ENCODE measurements at regions of chr21 and their contacts with region 1.

Region 1: GRCh38 chr21:34129039-34129891 is 55.9 kb downstream of the MRPS6 start:
- DNase-seq: peak; percentile 5 to 50
- H3K4me3 ChIP-seq: peak overlapping the region in 3 of 4 experiments; percentile 18 to 41 (median 21); a peak in 3 of 8 replicates
- H3K27ac ChIP-seq: no peak overlapping the region
- H3K4me1 ChIP-seq: peaks cover 12 to 45% (median 37%) of the 10 kb centered on the region in 4 experiments
- H3K27me3 ChIP-seq: no peaks in the 10 kb centered on the region
- CTCF ChIP-seq: peak in 2 of 3 experiments; percentile 8 to 43; a peak in 2 of 4 replicates
- EP300 ChIP-seq: no peak
- POLR2A ChIP-seq: no peak
- RAD21 ChIP-seq: peak; percentile 36 to 40; a peak in 3 of 4 replicates

Region 2: GRCh38 chr21:34091607-34092006 is 37.7 kb before region 1 on chr21:
- CTCF ChIA-PET with region 1: interaction called, 17 read pairs
- POLR2A ChIA-PET with region 1: no interaction called
- DNase-seq: no peak
- H3K4me3 ChIP-seq: no peak overlapping the region
- H3K27ac ChIP-seq: no peak overlapping the region
- H3K4me1 ChIP-seq: peaks cover 2 to 17% (median 6%) of the 10 kb centered on the region in 4 experiments; a peak in 5 of 7 replicates
- H3K27me3 ChIP-seq: no peaks in the 10 kb centered on the region
- CTCF ChIP-seq: peak in 1 of 3 experiments; percentile 46; a peak in 2 of 4 replicates
- EP300 ChIP-seq: no peak
- POLR2A ChIP-seq: no peak
- RAD21 ChIP-seq: no peak; a peak in 1 of 4 replicates

Region 3: DNA sequence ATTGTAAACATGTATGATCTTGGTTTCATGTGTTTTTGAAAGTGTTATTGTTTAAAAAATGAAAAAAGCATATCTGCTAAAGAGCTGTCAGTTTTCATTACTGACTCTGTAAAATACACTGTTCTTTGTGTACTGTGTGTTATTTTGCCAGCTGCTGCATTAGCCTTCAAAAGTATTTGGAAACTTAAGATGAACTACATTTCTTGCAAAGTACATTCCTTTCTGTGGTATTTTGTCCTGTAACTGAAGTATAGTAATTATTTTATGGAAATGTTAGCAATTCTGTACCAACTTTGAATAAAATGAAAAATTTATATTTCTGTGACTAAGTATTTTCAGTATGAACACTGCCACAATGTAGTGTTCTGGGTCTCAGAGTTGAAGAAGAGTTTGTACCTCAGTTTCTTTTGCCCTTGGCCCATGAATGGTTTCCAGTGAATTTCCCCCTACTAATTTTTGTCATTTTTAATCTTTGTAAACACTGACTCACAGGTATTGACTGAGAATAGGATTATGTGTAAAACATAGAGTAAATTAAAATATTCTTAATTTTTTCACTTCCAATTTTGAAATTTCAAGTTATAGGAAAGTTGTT is 23.2 kb before region 1 on chr21:
- CTCF ChIA-PET with region 1: interaction called, 14 read pairs
- POLR2A ChIA-PET with region 1: no interaction called
- DNase-seq: no peak
- H3K4me3 ChIP-seq: no peak overlapping the region
- H3K27ac ChIP-seq: no peak overlapping the region
- H3K4me1 ChIP-seq: peaks cover 0 to 7% (median under 1%) of the 10 kb centered on the region in 4 experiments; a peak in 4 of 7 replicates
- H3K27me3 ChIP-seq: no peaks in the 10 kb centered on the region
- CTCF ChIP-seq: no peak
- EP300 ChIP-seq: no peak
- POLR2A ChIP-seq: no peak
- RAD21 ChIP-seq: no peak

Region 4: GRCh38 chr21:34202553-34203372 is 73.5 kb after region 1 on chr21:
- CTCF ChIA-PET with region 1: interaction called, 56 read pairs
- POLR2A ChIA-PET with region 1: interaction called, 10 read pairs
- DNase-seq: peak in 1 of 2 experiments; percentile 76
- H3K4me3 ChIP-seq: peak overlapping the region; percentile 34 to 59 (median 56)
- H3K27ac ChIP-seq: peak overlapping the region; percentile 75
- H3K4me1 ChIP-seq: peaks cover 7 to 24% (median 12%) of the 10 kb centered on the region in 4 experiments
- H3K27me3 ChIP-seq: no peaks in the 10 kb centered on the region
- CTCF ChIP-seq: no peak
- EP300 ChIP-seq: no peak
- POLR2A ChIP-seq: peak in 1 of 2 experiments; percentile 30; a peak in 1 of 3 replicates
- RAD21 ChIP-seq: no peak

Region 5: GRCh38 chr21:34243562-34243961 is 114.3 kb after region 1 on chr21:
- CTCF ChIA-PET with region 1: interaction called, 13 read pairs
- POLR2A ChIA-PET with region 1: interaction called, 3 read pairs
- DNase-seq: peak in 1 of 2 experiments; percentile 60
- H3K4me3 ChIP-seq: no peak overlapping the region
- H3K27ac ChIP-seq: no peak overlapping the region
- H3K4me1 ChIP-seq: no peaks in the 10 kb centered on the region
- H3K27me3 ChIP-seq: no peaks in the 10 kb centered on the region
- CTCF ChIP-seq: peak; percentile 71 to 74 (median 74)
- EP300 ChIP-seq: no peak
- POLR2A ChIP-seq: no peak
- RAD21 ChIP-seq: peak; percentile 76 to 86

Region 6: GRCh38 chr21:34351786-34352241 is 222.5 kb after region 1 on chr21:
- CTCF ChIA-PET with region 1: interaction called, 10 read pairs
- POLR2A ChIA-PET with region 1: no interaction called
- DNase-seq: no peak
- H3K4me3 ChIP-seq: no peak overlapping the region
- H3K27ac ChIP-seq: no peak overlapping the region
- H3K4me1 ChIP-seq: no peaks in the 10 kb centered on the region; a peak in 1 of 7 replicates
- H3K27me3 ChIP-seq: no peaks in the 10 kb centered on the region; a peak in 1 of 7 replicates
- CTCF ChIP-seq: peak; percentile 45 to 56 (median 51)
- EP300 ChIP-seq: no peak
- POLR2A ChIP-seq: no peak
- RAD21 ChIP-seq: peak; percentile 80 to 82

Measured in H1 (cell line).